Body of pancreas (tissue), 4 donors: ENCODE measurements at regions of chr4 and their contacts with region 1.

Region 1: DNA sequence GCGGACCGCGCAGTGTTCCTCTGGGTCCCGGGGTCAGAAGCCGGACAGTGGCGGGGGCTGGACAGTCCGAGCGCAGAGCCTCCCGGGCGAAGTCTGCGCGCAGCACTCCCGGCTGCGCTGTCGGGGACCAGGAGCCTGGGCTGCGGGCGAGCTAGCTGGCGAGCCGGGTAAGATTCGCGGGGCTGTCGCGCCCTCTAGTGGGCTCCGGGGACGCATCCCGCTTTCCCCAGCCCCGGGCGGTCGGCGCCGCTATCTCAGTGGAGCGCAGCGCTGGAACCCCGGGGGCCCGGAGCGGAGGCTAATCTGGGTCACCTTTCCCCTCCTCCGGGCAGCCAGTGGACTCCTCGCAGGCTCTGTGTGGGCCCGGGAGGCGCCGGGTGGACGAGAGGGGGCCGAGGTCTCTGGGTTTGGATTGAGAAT is 4.2 kb downstream of the PDGFRA start:
- DNase-seq: peak; percentile 83 to 86 (median 84)
- ATAC-seq: peak; percentile 86
- H3K4me3 ChIP-seq: peak overlapping the region in 1 of 2 donors; percentile 30
- H3K27ac ChIP-seq: peak overlapping the region in 1 of 4 donors; percentile 19
- H3K4me1 ChIP-seq: peaks cover 51% of the 10 kb centered on the region
- H3K27me3 ChIP-seq: peaks cover 0 to 43% of the 10 kb centered on the region in 2 donors
- CTCF ChIP-seq: peak; percentile 71 to 90 (median 83)
- POLR2A ChIP-seq: no peak

Region 2: DNA sequence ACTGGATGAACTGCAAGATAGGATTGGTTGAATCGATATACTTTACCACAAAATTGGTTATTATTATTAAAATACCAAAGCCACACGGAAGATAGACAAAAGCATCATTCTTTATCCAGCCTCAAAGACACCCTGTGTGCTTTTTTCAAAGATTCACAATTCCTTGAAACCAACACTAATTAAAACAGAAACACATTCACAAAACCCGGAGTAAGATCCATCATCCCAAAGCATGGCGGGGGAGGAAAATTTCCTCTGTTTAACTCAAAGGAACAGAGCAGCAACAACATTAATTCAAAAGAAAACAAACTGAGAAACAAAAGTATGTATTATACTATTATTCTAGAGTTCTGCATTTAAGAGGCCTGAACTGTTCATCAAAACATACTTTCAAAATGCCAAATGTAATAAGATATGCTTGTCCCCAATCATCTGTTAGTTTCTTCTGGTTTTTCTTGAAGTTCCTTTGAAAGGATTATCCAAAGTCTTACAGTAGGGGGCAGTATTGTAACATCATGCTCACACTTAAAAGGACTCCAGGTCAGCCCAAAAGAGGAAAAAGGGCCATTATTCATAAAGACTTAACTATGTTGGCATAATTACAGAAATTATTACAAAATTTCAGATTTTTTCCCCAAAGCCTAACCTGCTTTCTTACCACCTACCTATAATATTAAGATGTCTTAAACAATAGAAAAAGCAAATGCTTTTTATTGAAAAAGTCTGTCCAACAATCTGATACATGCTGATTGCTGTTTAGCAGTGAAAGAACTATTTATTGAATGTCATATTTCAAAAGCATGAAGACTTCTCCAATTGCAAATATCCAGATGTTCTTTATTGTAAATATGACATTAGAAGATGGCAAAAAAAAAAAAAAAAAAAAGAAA is 1036.2 kb before region 1 on chr4:
- intact Hi-C with region 1: loop called (anchors 10 kb)
- DNase-seq: peak in 1 of 4 donors; percentile 3
- ATAC-seq: peak; percentile 62
- H3K4me3 ChIP-seq: no peak overlapping the region
- H3K27ac ChIP-seq: no peak overlapping the region
- H3K4me1 ChIP-seq: no peaks in the 10 kb centered on the region
- H3K27me3 ChIP-seq: no peaks in the 10 kb centered on the region
- CTCF ChIP-seq: peak; percentile 45 to 80 (median 75)
- POLR2A ChIP-seq: no peak

Region 3: GRCh38 chr4:53914313-53915016 is 318.8 kb before region 1 on chr4:
- intact Hi-C with region 1: loop called (anchors 5 kb)
- DNase-seq: peak in 1 of 4 donors; percentile 44
- ATAC-seq: no peak
- H3K4me3 ChIP-seq: no peak overlapping the region
- H3K27ac ChIP-seq: no peak overlapping the region
- H3K4me1 ChIP-seq: peaks cover under 1% of the 10 kb centered on the region
- H3K27me3 ChIP-seq: no peaks in the 10 kb centered on the region
- CTCF ChIP-seq: no peak
- POLR2A ChIP-seq: no peak

Region 4: GRCh38 chr4:54513204-54513603 is 279.9 kb after region 1 on chr4:
- intact Hi-C with region 1: no loop called
- DNase-seq: peak in 1 of 4 donors; percentile 25
- ATAC-seq: peak; percentile 24
- H3K4me3 ChIP-seq: no peak overlapping the region
- H3K27ac ChIP-seq: no peak overlapping the region
- H3K4me1 ChIP-seq: no peaks in the 10 kb centered on the region
- H3K27me3 ChIP-seq: no peaks in the 10 kb centered on the region
- CTCF ChIP-seq: no peak
- POLR2A ChIP-seq: no peak